Vagina (tissue), 2 donors: ENCODE measurements at regions of chr1 and their contacts with region 1.

Region 1: GRCh38 chr1:65209005-65209885 is 61.2 kb downstream of the AK4 start:
- DNase-seq: no peak
- H3K4me3 ChIP-seq: no peak overlapping the region
- H3K27ac ChIP-seq: no peak overlapping the region
- H3K4me1 ChIP-seq: no peaks in the 10 kb centered on the region
- H3K27me3 ChIP-seq: no peaks in the 10 kb centered on the region
- CTCF ChIP-seq: peak; percentile 19 to 48 (median 44)
- POLR2A ChIP-seq: no peak

Region 2: GRCh38 chr1:63847308-63847910 is 1361.8 kb before region 1 on chr1:
- intact Hi-C with region 1: no loop called
- DNase-seq: no peak
- H3K4me3 ChIP-seq: no peak overlapping the region
- H3K27ac ChIP-seq: no peak overlapping the region
- H3K4me1 ChIP-seq: peaks cover 31% of the 10 kb centered on the region
- H3K27me3 ChIP-seq: no peaks in the 10 kb centered on the region
- CTCF ChIP-seq: no peak
- POLR2A ChIP-seq: no peak

Region 3: DNA sequence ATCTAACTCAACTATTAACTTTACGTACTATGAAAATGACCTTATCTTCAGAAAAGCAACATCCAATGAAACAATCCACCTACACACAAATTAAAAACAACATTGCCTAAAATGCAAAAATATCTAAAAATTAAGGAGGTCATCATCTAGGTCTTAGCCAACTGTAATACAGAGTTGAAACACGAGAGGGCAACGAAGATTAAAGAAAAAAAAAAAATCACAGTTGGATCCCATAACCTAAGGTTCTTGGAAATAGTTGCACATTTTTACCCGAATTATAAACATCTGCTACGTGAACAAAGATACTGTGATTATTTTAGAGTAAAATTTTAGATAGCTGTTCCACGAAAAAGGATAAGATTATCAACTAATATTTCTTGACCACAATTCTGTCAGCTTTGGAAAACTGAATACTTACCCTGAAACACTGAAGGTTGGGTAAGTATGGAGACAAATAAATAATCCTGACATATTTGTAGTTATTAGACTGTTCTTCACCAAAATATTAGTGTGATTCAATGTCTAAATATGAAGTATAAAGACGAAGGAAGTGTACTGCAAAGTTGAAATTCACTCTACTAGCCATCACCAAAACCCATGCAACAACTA is 149.2 kb before region 1 on chr1:
- intact Hi-C with region 1: loop called (anchors 5 kb)
- DNase-seq: no peak
- H3K4me3 ChIP-seq: no peak overlapping the region
- H3K27ac ChIP-seq: peak overlapping the region; percentile 15
- H3K4me1 ChIP-seq: peaks cover 69% of the 10 kb centered on the region
- H3K27me3 ChIP-seq: no peaks in the 10 kb centered on the region
- CTCF ChIP-seq: peak; percentile 32 to 62 (median 57)
- POLR2A ChIP-seq: no peak

Region 4: GRCh38 chr1:65148548-65149350 is 60.5 kb before region 1 on chr1:
- intact Hi-C with region 1: loop called (anchors 10 kb)
- DNase-seq: no peak
- H3K4me3 ChIP-seq: peak overlapping the region; percentile 63 to 86
- H3K27ac ChIP-seq: peak overlapping the region; percentile 83
- H3K4me1 ChIP-seq: peaks cover 13% of the 10 kb centered on the region
- H3K27me3 ChIP-seq: no peaks in the 10 kb centered on the region
- CTCF ChIP-seq: no peak
- POLR2A ChIP-seq: no peak